ENCODE measurements at regions of chr11 and their contacts with region 1.

Region 1: DNA sequence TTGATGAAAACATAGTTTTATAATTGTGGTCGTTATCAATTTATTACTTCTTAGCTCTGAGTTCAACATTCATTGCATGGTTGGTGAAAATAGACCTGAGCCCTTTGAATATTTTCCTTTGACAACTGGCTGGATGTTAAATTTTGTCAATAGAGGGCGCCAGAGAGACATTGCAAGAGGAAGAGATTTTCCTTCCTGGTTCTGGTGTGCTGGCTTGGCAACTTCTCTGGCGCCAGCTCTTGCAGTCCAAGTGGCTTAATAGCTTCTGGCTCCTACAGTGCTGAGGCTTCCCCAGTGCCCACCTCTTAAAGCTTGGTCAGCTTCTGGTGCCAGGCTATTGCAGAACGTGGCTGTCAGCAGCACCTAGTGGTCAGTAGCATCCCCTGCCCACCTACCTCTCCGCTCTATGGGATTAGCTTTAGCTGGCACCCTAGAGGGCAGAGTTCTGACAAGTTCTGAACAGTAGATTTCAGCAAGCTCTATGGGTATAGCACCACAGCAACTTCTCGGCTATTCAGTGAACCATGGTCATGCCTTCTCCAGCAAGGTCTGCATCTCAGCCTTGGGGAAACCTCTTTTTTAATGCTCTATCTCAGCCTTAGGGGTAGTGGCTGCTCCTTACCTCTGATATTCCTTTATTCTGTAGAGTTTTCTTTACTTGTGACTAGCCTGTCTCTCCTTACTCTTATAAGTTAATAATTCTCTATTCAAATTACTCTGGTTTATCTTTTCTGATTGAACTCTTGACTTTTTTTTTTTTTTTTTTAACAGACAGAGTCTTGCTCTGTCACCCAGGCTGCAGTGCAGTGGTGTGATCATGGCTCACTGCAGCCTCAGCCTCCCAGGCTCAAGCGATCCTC is 59.4 kb downstream of the ACER3 start:
- DNase-seq: peak; percentile 66
- H3K4me3 ChIP-seq: peak overlapping the region; percentile 12 to 41; a peak in 3 of 4 replicates
- H3K27ac ChIP-seq: no peak overlapping the region
- H3K4me1 ChIP-seq: peaks cover 3 to 9% of the 10 kb centered on the region in 2 experiments; a peak in 2 of 4 replicates
- H3K27me3 ChIP-seq: no peaks in the 10 kb centered on the region
- CTCF ChIP-seq: peak; percentile 97
- EP300 ChIP-seq: no peak
- RAD21 ChIP-seq: peak; percentile 79

Region 2: DNA sequence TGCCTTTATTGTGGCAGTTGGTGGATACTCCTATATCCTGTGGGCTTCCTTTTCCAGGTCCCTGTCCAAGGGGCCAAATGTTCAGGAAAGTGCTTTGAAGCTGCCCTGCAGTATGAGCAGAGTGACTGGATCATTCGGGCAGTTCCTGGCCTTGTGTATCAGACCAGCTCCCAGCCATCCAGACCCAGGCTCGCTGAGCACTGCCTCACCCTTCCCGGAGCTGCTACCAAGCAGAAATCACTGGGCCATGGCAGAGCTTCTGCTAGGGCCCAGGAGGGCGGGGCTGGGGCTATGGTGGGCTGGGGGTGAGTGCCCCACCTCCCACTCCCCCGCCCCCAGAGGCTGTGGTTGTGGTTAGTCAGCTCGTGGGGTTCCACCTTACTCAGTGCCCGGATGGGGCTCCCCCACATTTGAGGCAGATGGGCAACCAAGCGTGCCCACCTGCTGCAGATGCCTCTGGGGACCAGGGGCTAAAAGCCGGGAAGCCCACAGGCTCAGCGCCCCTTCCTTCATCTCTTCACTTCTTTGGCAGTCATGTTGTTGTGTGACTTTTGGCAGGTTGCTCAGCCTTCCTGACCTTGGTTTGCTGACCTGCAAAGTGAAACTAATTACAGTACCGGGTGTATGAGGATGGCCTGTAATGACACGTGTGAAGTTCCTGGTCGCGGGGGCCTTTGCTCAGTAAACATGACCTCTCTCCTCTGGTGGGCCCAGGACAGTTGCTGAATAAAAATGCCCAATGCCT is 247.5 kb before region 1 on chr11:
- CTCF ChIA-PET with region 1: no interaction called
- POLR2A ChIA-PET with region 1: no interaction called
- DNase-seq: no peak
- H3K4me3 ChIP-seq: no peak overlapping the region
- H3K27ac ChIP-seq: no peak overlapping the region
- H3K4me1 ChIP-seq: peaks cover 0 to 14% of the 10 kb centered on the region in 2 experiments; a peak in 1 of 4 replicates
- H3K27me3 ChIP-seq: no peaks in the 10 kb centered on the region
- CTCF ChIP-seq: no peak
- EP300 ChIP-seq: no peak
- RAD21 ChIP-seq: no peak

Region 3: DNA sequence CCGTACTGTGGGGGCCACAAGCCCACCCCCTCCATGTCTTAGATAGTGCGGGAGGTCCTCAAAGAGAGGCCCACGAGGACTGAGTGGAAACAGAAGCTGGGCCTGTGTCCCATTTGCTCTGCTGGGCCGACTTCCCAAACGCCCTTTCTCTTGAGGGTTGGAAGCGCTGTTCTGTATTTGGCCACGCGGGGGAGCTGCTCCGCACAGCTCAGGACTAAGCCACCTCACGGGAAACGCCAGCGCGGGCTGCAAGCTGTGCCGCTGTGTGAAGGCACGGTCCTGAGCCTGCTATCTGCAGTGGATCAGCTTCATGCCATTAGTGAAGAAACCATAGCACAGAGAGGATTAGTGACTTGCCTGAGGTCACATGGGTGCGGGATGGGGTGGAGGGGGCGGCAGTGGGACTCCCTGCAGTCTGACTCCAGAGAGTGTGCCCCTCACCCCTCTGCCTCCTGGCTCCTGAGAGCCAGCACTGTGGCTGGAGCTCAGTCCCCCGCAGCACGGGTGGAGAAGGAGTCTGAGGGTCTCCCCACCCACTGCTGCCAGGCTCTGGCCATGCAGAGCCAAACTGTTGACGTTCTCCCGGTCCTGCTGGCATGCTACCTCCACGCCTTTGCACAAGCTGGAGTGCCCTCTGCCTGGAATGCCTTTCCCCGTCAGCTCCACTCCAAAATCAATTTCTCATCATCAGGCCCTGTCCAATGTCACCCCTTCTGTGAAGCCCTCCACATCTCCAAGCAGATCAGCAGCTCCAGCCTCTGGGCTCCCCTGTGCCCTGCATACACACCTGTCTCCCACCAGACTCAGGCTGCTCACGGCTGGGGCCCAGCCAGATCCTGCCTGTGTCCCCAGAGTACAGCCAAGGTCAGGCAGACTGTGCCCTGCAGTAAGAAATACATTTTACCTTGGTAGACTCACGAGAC is 198.1 kb before region 1 on chr11:
- CTCF ChIA-PET with region 1: interaction called, 108 read pairs
- POLR2A ChIA-PET with region 1: no interaction called
- DNase-seq: peak; percentile 86
- H3K4me3 ChIP-seq: peak overlapping the region in 1 of 2 experiments; percentile 40; a peak in 2 of 4 replicates
- H3K27ac ChIP-seq: no peak overlapping the region; a peak in 1 of 4 replicates
- H3K4me1 ChIP-seq: peaks cover 0 to 4% of the 10 kb centered on the region in 2 experiments; a peak in 1 of 4 replicates
- H3K27me3 ChIP-seq: peaks cover 21% of the 10 kb centered on the region; the same call in 1 of the 2 replicates
- CTCF ChIP-seq: peak; percentile 85
- EP300 ChIP-seq: no peak
- RAD21 ChIP-seq: peak; percentile 69

Region 4: DNA sequence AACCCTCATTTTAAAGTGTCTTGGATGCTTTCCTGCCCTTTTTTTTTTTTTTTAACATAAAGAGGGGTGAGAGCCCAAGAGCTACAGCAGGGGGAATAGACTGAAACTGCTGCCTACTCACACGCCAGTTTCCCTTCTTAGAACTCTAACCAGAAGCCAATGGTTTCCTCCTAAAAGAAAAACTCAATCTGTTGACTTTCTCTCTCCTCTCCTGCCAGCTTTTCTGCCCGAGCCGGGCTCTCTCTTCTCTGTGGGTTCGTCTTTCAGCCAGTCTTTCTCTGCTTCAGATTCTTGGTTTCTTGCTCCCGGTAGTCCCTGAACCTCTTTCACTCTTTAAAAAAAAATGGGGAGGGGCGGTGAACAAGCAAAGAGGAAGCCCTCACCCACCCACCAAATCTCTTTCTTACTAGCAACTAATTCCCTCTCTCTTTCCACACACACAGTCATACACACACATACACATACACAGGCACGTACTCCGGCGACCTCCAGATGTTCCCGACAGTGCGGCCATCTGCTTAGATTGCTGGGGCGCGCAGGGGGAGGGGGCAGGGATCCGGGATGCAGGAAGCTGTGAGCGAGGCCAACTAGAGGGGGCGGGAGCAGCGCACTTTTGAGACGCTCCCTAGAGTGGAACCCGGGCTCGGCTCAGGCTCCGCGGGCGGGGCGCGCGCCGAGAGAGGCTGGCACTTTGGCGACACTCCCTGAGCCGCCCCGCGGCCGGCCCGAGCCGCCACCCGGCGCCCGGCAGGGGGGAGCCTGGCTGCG is 137.4 kb before region 1 on chr11:
- CTCF ChIA-PET with region 1: interaction called, 15 read pairs
- POLR2A ChIA-PET with region 1: no interaction called
- DNase-seq: peak; percentile 94
- H3K4me3 ChIP-seq: peak overlapping the region; percentile 90 to 93
- H3K27ac ChIP-seq: peak overlapping the region; percentile 63 to 97; a peak in 3 of 4 replicates
- H3K4me1 ChIP-seq: peaks cover 18 to 56% of the 10 kb centered on the region in 2 experiments; a peak in 3 of 4 replicates
- H3K27me3 ChIP-seq: no peaks in the 10 kb centered on the region
- CTCF ChIP-seq: no peak
- EP300 ChIP-seq: peak in 1 of 2 experiments; percentile 66; a peak in 1 of 4 replicates
- RAD21 ChIP-seq: no peak

Region 5: DNA sequence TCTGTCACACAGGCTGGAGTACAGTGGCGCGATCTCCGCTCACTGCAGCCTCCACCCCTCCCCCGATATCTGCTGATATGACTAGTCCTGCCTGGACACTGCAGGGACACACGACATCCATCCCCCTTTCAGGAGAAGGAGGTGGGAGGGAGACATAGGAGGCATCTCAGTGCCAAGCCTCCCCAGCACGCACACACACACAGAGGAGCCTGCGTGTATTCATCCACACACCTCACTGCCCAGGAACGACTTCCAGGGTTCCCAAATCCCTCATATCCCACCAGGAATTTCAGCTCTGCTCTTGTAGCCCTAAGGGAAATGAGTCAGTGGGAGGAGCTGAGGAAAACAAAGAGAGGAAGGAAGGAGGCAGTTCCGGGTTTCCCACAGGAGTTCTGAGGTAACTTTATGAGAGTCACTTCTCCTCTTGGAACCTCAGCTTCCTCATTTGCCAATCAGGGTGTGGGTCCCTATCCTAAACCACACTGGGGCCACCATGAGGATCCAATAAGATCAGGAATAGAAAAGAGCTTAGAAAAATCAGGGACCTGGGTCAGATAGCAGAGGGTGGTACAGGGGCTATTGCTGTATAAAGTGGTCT is 96.5 kb before region 1 on chr11:
- CTCF ChIA-PET with region 1: interaction called, 216 read pairs
- POLR2A ChIA-PET with region 1: no interaction called
- DNase-seq: no peak
- H3K4me3 ChIP-seq: no peak overlapping the region
- H3K27ac ChIP-seq: no peak overlapping the region; a peak in 1 of 4 replicates
- H3K4me1 ChIP-seq: peaks cover 0 to 7% of the 10 kb centered on the region in 2 experiments; a peak in 2 of 4 replicates
- H3K27me3 ChIP-seq: no peaks in the 10 kb centered on the region
- CTCF ChIP-seq: no peak
- EP300 ChIP-seq: no peak
- RAD21 ChIP-seq: no peak

Region 6: DNA sequence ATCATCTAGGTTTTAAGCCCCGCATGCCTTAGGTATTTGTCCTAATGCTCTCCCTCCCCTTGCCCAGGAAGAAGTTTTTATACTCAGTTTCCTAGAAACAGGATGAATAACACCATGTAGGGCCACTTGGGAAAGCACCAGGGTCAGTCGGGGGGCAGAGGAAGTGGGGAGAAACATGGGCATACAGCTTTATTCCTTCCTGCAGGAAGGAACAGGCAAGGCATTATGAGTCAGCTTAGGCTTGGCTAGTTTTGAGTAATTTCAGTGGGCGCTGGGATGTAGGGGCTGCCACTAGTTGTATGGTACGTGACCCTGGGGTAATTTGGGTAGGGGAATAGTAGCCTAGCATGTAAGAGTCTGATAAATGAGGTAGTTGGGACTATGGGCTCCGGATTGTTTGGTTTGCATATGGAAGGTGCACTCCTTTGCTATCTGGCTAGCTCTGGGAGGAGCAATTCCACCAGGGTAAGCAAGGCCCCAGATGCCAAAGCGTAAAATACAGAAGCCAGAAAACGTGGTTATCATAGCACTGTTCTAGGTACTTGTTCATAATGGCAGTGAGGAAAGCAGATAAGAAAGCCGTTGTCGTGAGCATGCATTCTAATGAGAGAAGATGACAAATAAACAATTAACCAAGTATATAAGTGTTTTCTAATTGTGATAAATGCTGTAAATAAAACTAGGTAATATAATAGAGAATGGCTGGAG is 34.6 kb before region 1 on chr11:
- CTCF ChIA-PET with region 1: interaction called, 67 read pairs
- POLR2A ChIA-PET with region 1: no interaction called
- DNase-seq: no peak
- H3K4me3 ChIP-seq: no peak overlapping the region
- H3K27ac ChIP-seq: no peak overlapping the region
- H3K4me1 ChIP-seq: peaks cover 0 to 4% of the 10 kb centered on the region in 2 experiments; a peak in 1 of 4 replicates
- H3K27me3 ChIP-seq: no peaks in the 10 kb centered on the region
- CTCF ChIP-seq: no peak
- EP300 ChIP-seq: no peak
- RAD21 ChIP-seq: no peak

Region 7: DNA sequence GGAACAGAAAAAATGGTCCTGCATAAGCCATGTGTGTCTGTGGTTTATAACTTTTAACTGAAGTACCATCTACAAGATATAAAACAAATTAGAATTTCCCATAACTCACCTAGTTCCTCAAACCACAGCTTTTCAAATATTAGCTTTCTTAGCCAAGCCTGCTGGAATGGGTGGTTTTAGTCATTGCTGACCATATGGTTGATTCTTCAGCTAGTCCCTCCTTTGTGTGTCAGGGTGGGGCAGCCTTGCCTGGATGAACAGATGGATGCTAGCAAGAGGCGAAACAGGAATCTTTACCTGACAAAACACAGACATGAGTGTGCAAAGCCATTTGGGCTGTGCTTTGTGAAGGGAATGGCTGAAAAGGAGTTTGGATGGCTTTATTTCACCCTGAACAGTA is 107.2 kb after region 1 on chr11:
- CTCF ChIA-PET with region 1: interaction called, 53 read pairs
- POLR2A ChIA-PET with region 1: no interaction called
- DNase-seq: no peak
- H3K4me3 ChIP-seq: no peak overlapping the region
- H3K27ac ChIP-seq: no peak overlapping the region
- H3K4me1 ChIP-seq: no peaks in the 10 kb centered on the region
- H3K27me3 ChIP-seq: no peaks in the 10 kb centered on the region
- CTCF ChIP-seq: no peak
- EP300 ChIP-seq: no peak
- RAD21 ChIP-seq: no peak

Region 8: GRCh38 chr11:77101052-77101537 is 181.0 kb after region 1 on chr11:
- CTCF ChIA-PET with region 1: interaction called, 11 read pairs
- POLR2A ChIA-PET with region 1: no interaction called
- DNase-seq: peak; percentile 59
- H3K4me3 ChIP-seq: no peak overlapping the region
- H3K27ac ChIP-seq: no peak overlapping the region
- H3K4me1 ChIP-seq: peaks cover 0 to 10% of the 10 kb centered on the region in 2 experiments; a peak in 1 of 4 replicates
- H3K27me3 ChIP-seq: no peaks in the 10 kb centered on the region
- CTCF ChIP-seq: peak; percentile 67
- EP300 ChIP-seq: no peak
- RAD21 ChIP-seq: peak; percentile 35

Region 9: DNA sequence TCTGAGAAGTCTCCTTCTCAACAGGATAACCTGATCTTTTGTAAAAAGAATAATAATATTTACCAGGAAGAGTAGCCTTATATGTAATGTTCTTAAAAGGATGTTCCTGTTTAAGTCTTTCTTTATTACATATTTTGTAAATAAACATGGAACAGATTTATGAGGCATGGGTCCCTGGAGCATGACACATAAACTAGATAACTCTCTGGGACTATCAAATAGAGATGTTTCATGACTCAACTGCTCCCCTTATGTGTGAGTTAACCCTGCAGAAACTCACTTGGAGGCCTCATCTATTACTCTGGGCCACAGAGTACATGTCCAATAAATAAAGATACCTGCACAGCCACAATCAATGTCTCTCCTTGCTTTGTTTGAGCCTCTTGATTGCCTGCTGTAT is 316.8 kb after region 1 on chr11:
- CTCF ChIA-PET with region 1: no interaction called
- POLR2A ChIA-PET with region 1: no interaction called
- DNase-seq: no peak
- H3K4me3 ChIP-seq: no peak overlapping the region
- H3K27ac ChIP-seq: no peak overlapping the region
- H3K4me1 ChIP-seq: no peaks in the 10 kb centered on the region
- H3K27me3 ChIP-seq: no peaks in the 10 kb centered on the region
- CTCF ChIP-seq: no peak
- EP300 ChIP-seq: no peak
- RAD21 ChIP-seq: no peak

Measured in SK-N-SH (cell line).